Natural killer cell (primary cell): ENCODE measurements at regions of chr17 and their contacts with region 1.

Region 1: DNA sequence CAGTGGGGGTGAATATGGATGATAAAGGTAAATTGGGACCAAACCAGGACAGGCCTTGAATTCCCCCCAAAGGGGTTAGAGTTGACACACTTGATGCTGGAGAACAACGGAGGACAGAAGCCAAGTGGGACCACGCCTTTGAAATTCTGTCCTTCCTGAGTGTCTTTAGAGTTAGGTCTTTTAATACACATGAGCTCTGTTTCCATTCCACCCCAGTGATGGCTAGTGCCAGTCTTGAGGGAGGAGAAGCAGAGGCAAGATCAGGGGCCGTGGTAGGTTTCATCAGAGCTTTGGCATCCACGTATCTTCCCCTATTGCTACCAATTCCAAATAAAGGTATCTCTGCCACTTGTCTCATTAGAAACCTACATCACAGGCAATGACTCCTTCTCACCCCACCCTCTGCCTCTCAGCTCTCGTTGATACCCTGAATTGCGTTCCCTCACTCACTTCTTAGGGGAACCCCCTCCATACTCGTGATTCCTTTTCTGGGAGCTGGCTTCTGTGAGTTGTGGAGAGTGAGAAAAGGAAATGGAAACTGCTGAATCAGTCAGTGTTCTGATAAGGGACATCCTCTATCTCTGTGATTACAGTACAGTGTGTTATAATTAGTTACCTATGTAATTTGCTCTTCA is 2.4 kb upstream of the CCL3L1 start:
- DNase-seq: peak; percentile 59 to 80
- ATAC-seq: peak; percentile 36 to 61 (median 57)
- H3K4me3 ChIP-seq: no peak overlapping the region
- H3K4me3 Mint-ChIP-seq: peak overlapping the region; percentile 63
- H3K27ac ChIP-seq: no peak overlapping the region
- H3K27ac Mint-ChIP-seq: peak overlapping the region; percentile 89 to 95
- H3K4me1 ChIP-seq: peaks cover 72% of the 10 kb centered on the region
- H3K4me1 Mint-ChIP-seq: peaks cover 81 to 84% of the 10 kb centered on the region in 2 donors
- H3K27me3 ChIP-seq: no peaks in the 10 kb centered on the region
- H3K27me3 Mint-ChIP-seq: no peaks in the 10 kb centered on the region
- CTCF ChIP-seq: no peak

Region 2: GRCh38 chr17:35898283-35899070 is 300.5 kb before region 1 on chr17:
- intact Hi-C with region 1: loop called (anchors 5 kb)
- DNase-seq: peak in 1 of 2 donors; percentile 45
- ATAC-seq: peak; percentile 2 to 49 (median 25)
- H3K4me3 ChIP-seq: no peak overlapping the region
- H3K4me3 Mint-ChIP-seq: peak overlapping the region; percentile 82
- H3K27ac ChIP-seq: peak overlapping the region; percentile 76
- H3K27ac Mint-ChIP-seq: peak overlapping the region; percentile 96 to 97
- H3K4me1 ChIP-seq: peaks cover 98% of the 10 kb centered on the region
- H3K4me1 Mint-ChIP-seq: peaks cover 84 to 91% of the 10 kb centered on the region in 2 donors
- H3K27me3 ChIP-seq: no peaks in the 10 kb centered on the region
- H3K27me3 Mint-ChIP-seq: no peaks in the 10 kb centered on the region
- CTCF ChIP-seq: no peak

Region 3: GRCh38 chr17:36072431-36073121 is 126.4 kb before region 1 on chr17:
- intact Hi-C with region 1: no loop called
- DNase-seq: peak; percentile 62 to 83
- ATAC-seq: peak; percentile 71 to 80 (median 79)
- H3K4me3 ChIP-seq: no peak overlapping the region
- H3K4me3 Mint-ChIP-seq: peak overlapping the region; percentile 51
- H3K27ac ChIP-seq: peak overlapping the region; percentile 51
- H3K27ac Mint-ChIP-seq: peak overlapping the region; percentile 95 to 96
- H3K4me1 ChIP-seq: peaks cover 51% of the 10 kb centered on the region
- H3K4me1 Mint-ChIP-seq: peaks cover 87 to 88% of the 10 kb centered on the region in 2 donors
- H3K27me3 ChIP-seq: no peaks in the 10 kb centered on the region
- H3K27me3 Mint-ChIP-seq: no peaks in the 10 kb centered on the region
- CTCF ChIP-seq: peak; percentile 87

Region 4: GRCh38 chr17:36188891-36189306 is 10.0 kb before region 1 on chr17:
- intact Hi-C with region 1: loop called (anchors 1 kb)
- DNase-seq: peak; percentile 85 to 88
- ATAC-seq: peak; percentile 78 to 90 (median 89)
- H3K4me3 ChIP-seq: no peak overlapping the region
- H3K4me3 Mint-ChIP-seq: peak overlapping the region; percentile 79
- H3K27ac ChIP-seq: peak overlapping the region; percentile 47
- H3K27ac Mint-ChIP-seq: peak overlapping the region; percentile 93 to 98
- H3K4me1 ChIP-seq: peaks cover 80% of the 10 kb centered on the region
- H3K4me1 Mint-ChIP-seq: peaks cover 92 to 96% of the 10 kb centered on the region in 2 donors
- H3K27me3 ChIP-seq: no peaks in the 10 kb centered on the region
- H3K27me3 Mint-ChIP-seq: no peaks in the 10 kb centered on the region
- CTCF ChIP-seq: no peak

Region 5: GRCh38 chr17:36212966-36213365 is 14.0 kb after region 1 on chr17:
- intact Hi-C with region 1: loop called (anchors 1 kb)
- DNase-seq: peak in 1 of 2 donors; percentile 48
- ATAC-seq: peak; percentile 38 to 53 (median 49)
- H3K4me3 ChIP-seq: no peak overlapping the region
- H3K4me3 Mint-ChIP-seq: peak overlapping the region; percentile 78
- H3K27ac ChIP-seq: no peak overlapping the region
- H3K27ac Mint-ChIP-seq: peak overlapping the region; percentile 87 to 91
- H3K4me1 ChIP-seq: peaks cover 73% of the 10 kb centered on the region
- H3K4me1 Mint-ChIP-seq: peaks cover 80 to 82% of the 10 kb centered on the region in 2 donors
- H3K27me3 ChIP-seq: peaks cover 2% of the 10 kb centered on the region
- H3K27me3 Mint-ChIP-seq: no peaks in the 10 kb centered on the region
- CTCF ChIP-seq: no peak